A549 (cell line): ENCODE measurements at regions of chr6 and their contacts with region 1.

Region 1: GRCh38 chr6:39309942-39310531 is 4.2 kb downstream of the KCNK17 start:
- DNase-seq: peak; percentile 64 to 74
- ATAC-seq: peak; percentile 83 to 94
- H3K4me3 ChIP-seq: no peak overlapping the region
- H3K27ac ChIP-seq: no peak overlapping the region
- H3K4me1 ChIP-seq: no peaks in the 10 kb centered on the region
- CTCF ChIP-seq: peak; percentile 78
- EP300 ChIP-seq: no peak
- POLR2A ChIP-seq: no peak
- RAD21 ChIP-seq: peak; percentile 83 to 89

Region 2: GRCh38 chr6:38871741-38872568 is 438.1 kb before region 1 on chr6:
- CTCF ChIA-PET with region 1: interaction called, 23 read pairs
- POLR2A ChIA-PET with region 1: no interaction called
- DNase-seq: peak; percentile 18 to 38
- ATAC-seq: peak; percentile 64 to 78; a peak in 5 of 6 replicates
- H3K4me3 ChIP-seq: no peak overlapping the region
- H3K27ac ChIP-seq: no peak overlapping the region
- H3K4me1 ChIP-seq: no peaks in the 10 kb centered on the region
- CTCF ChIP-seq: peak; percentile 63
- EP300 ChIP-seq: no peak
- POLR2A ChIP-seq: no peak
- RAD21 ChIP-seq: peak; percentile 63 to 74

Region 3: GRCh38 chr6:38973178-38974054 is 336.6 kb before region 1 on chr6:
- CTCF ChIA-PET with region 1: interaction called, 17 read pairs
- POLR2A ChIA-PET with region 1: no interaction called
- DNase-seq: peak; percentile 33 to 74
- ATAC-seq: peak; percentile 85 to 86
- H3K4me3 ChIP-seq: no peak overlapping the region
- H3K27ac ChIP-seq: no peak overlapping the region
- H3K4me1 ChIP-seq: no peaks in the 10 kb centered on the region
- CTCF ChIP-seq: peak; percentile 57
- EP300 ChIP-seq: no peak
- POLR2A ChIP-seq: no peak
- RAD21 ChIP-seq: peak; percentile 53 to 55

Region 4: DNA sequence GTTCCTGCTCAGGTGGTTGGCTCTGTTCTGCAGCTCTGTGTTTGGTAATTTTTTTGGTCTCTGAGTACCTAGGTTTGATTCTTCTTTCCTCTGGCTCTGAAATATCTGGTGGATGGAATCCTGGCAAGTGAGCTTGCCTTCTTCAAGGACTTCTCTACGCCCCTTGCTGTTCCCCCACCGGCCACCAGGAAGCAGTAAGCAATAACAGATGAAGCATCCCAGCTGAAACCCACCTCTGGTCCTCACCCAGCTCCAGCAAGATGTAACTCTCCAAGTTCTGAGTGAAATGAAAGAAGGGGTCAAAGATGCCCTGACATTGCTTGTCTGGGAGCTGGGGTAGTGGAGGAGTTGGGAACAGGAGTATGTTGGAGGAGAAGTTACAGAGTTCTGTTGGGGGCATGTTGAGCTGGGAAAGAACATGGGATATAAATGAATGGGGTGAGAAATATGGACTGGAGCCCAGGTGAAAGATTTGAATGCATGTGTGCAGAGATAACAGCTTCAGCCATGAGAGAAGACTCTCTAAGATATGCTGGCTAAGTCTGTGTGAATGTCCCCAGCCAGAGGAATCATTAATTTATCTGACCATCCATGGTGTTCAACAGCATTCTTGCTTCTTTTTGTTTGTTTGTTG is 312.8 kb before region 1 on chr6:
- CTCF ChIA-PET with region 1: interaction called, 11 read pairs
- POLR2A ChIA-PET with region 1: no interaction called
- DNase-seq: peak; percentile 1 to 16
- ATAC-seq: peak in 1 of 2 experiments; percentile 52; a peak in 1 of 6 replicates
- H3K4me3 ChIP-seq: no peak overlapping the region
- H3K27ac ChIP-seq: no peak overlapping the region
- H3K4me1 ChIP-seq: no peaks in the 10 kb centered on the region
- CTCF ChIP-seq: no peak
- EP300 ChIP-seq: no peak
- POLR2A ChIP-seq: no peak
- RAD21 ChIP-seq: peak; percentile 21 to 50; a peak in 2 of 5 replicates

Region 5: GRCh38 chr6:39153766-39154397 is 156.2 kb before region 1 on chr6:
- CTCF ChIA-PET with region 1: interaction called, 10 read pairs
- POLR2A ChIA-PET with region 1: no interaction called
- DNase-seq: no peak
- ATAC-seq: no peak
- H3K4me3 ChIP-seq: no peak overlapping the region
- H3K27ac ChIP-seq: no peak overlapping the region
- H3K4me1 ChIP-seq: no peaks in the 10 kb centered on the region
- CTCF ChIP-seq: no peak
- EP300 ChIP-seq: no peak
- POLR2A ChIP-seq: no peak
- RAD21 ChIP-seq: no peak